Common myeloid progenitor, CD34-positive (primary cell): ENCODE measurements at regions of chr2 and their contacts with region 1.

Region 1: DNA sequence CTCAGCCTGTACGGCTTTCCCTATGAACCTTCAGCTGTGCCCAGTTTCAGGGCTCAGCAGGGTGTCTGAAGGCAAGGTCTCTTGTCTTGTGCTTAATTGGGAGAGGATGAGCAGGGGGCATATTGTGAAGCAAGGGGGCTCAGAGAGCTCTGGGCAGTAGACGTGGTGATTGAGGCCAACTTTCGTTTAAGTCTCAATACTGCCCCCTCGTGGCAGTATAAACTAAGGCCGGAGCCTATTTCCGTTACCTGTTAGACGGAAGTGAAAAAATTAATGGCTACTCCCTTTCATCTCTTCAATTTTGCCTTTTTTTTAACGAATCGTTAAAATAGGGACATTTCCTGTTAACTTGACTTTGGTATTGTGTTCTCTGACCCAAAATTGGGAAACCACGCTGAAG is 193.4 kb downstream of the TDRD15 start:
- DNase-seq: peak; percentile 45 to 75 (median 71)
- H3K4me3 ChIP-seq: no peak overlapping the region
- H3K27ac ChIP-seq: no peak overlapping the region
- H3K4me1 ChIP-seq: no peaks in the 10 kb centered on the region
- H3K27me3 ChIP-seq: peaks cover 0 to 3% (median 0%) of the 10 kb centered on the region in 5 experiments

Region 2: GRCh38 chr2:21175895-21176646 is 141.1 kb before region 1 on chr2:
- CTCF ChIA-PET with region 1: interaction called, 31 read pairs
- POLR2A ChIA-PET with region 1: no interaction called
- DNase-seq: peak; percentile 8 to 46 (median 32)
- H3K4me3 ChIP-seq: no peak overlapping the region
- H3K27ac ChIP-seq: no peak overlapping the region
- H3K4me1 ChIP-seq: no peaks in the 10 kb centered on the region
- H3K27me3 ChIP-seq: peaks cover 0 to 9% (median 0%) of the 10 kb centered on the region in 5 experiments

Region 3: DNA sequence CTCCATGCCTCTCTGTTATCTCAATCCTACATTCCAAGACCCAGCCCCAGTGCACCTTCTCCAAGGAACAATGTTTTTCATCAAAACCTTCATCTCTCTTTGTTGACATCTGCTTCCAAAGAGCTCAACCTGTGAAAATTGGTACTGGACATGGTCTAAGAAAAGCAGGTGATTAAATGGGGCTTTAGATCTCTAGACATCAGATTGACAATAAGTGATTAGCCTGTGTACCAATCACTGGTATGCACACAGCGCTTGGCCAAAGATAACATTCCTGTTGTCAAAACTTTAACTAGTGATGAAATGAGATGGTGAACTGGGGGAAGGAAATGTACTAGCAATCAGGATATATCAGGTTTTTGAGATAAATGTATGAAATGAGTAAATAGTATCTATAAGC is 10.1 kb before region 1 on chr2:
- CTCF ChIA-PET with region 1: interaction called, 15 read pairs
- POLR2A ChIA-PET with region 1: no interaction called
- DNase-seq: no peak
- H3K4me3 ChIP-seq: no peak overlapping the region
- H3K27ac ChIP-seq: no peak overlapping the region
- H3K4me1 ChIP-seq: no peaks in the 10 kb centered on the region
- H3K27me3 ChIP-seq: no peaks in the 10 kb centered on the region